IMR-90 (cell line): ENCODE measurements at regions of chr2 and their contacts with region 1.

Region 1: DNA sequence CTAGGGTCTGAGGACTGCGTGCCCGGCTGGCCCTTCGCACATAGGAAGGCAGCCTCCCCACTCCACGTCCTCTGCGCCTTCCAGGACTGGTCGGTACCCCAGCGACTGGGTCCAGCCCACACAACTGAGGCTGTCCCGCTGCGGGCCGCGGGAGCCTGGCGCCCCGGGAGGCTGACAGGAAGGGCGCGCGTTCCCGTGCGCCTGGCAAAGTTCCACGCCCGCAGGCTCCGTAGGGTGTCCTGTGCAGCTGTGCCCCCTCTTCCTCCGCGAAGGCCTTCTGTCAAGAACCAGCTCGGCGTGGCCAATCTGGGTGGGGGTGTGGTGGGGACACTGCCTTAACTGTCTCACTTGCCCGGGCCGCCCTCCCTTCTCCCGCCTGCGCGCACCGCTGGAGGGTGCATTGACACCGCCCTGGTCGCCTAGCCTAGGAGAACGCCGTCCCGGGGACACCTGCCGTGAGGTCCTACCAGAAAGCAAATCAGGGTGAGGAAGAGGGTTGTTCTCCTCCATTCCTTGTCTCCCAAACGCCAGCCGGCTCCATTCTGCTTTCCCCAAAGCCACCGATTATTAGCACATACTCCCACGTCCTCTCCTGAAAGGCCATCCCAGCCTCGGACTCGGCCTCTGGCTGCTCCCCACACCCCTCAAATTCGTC is 618 bp upstream of the LYPD1 start:
- DNase-seq: no peak
- ATAC-seq: peak; percentile 30
- H3K4me3 ChIP-seq: peak overlapping the region; percentile 69
- H3K27ac ChIP-seq: peak overlapping the region; percentile 56
- H3K4me1 ChIP-seq: peaks cover 9% of the 10 kb centered on the region
- H3K27me3 ChIP-seq: no peaks in the 10 kb centered on the region
- CTCF ChIP-seq: no peak
- POLR2A ChIP-seq: no peak
- RAD21 ChIP-seq: no peak

Region 2: DNA sequence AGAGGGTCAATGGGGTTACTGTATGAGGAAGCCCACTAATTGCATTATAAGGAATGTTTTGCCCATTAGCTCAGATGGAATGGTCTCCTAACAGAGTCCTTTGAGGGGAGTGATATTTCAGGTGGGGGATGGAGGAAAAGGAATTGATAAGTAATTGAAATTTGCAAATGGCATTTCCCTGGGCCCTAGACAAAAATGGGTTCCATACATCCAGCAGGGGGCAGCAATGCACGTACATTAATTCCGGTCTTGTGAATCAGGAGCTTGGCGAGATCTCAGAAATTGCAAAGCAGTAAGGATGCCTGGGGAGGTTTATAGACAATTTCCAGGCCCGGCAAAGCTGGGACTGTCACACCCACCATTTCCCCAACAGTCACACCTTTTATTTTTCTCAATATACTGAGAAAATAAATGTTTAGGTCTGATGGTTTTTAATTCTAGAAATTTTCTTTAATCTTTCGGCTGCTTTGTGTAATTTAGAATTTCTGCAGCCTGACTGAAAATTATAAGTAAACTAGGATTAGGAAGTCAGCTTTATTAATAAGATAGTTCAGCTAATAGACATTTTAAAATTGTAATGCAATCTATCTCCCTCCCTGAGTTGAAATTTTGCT is 123.4 kb before region 1 on chr2:
- CTCF ChIA-PET with region 1: interaction called, 4 read pairs
- POLR2A ChIA-PET with region 1: no interaction called
- dilution Hi-C with region 1: no loop called
- in situ Hi-C with region 1: no loop called
- intact Hi-C with region 1: loop called (anchors 5 kb)
- DNase-seq: peak; percentile 85
- ATAC-seq: peak; percentile 67
- H3K4me3 ChIP-seq: no peak overlapping the region
- H3K27ac ChIP-seq: no peak overlapping the region
- H3K4me1 ChIP-seq: peaks cover 3% of the 10 kb centered on the region
- H3K27me3 ChIP-seq: no peaks in the 10 kb centered on the region
- CTCF ChIP-seq: peak; percentile 78
- POLR2A ChIP-seq: no peak
- RAD21 ChIP-seq: peak; percentile 85

Region 3: DNA sequence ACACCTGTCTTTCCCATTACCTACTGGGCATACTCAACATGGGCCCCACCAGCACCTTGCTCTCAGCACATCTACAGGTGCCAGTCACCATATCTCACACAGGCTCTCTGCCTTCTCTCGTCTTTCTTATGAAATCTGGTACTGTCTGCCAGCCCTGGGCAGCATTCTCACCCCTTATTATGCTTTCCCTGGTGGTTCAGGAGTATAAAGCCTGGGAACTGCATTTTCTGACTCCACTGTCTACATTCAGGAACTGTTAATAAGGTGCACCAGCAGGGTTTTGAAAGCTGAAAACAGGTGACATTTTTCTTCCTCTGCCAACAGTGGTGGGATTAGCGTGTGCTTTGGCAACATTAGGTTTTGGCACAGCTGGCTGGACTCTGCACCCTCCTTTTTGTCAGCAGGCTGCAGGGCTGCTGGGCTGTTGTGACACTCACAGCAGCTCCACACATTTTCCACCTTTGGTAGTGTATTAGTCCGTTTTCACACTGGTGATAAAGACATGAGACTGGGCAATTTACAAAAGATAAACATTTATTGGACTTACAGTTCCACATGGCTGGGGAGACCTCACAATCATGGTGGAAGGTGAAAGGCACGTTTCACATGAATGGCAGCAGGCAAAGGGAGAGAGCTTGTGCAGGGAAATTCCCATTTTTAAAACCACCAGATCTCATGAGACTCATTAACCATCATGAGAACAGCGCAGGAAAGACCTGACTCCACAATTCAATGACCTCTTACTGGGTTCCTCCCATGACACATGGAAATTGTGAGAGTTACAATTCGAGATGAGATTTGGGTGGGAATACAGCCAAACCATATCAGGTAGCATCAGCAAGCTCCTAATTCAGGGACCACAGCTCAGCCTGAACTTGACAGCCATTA is 342.5 kb after region 1 on chr2:
- CTCF ChIA-PET with region 1: no interaction called
- POLR2A ChIA-PET with region 1: no interaction called
- dilution Hi-C with region 1: no loop called
- in situ Hi-C with region 1: no loop called
- intact Hi-C with region 1: no loop called
- DNase-seq: no peak
- ATAC-seq: no peak
- H3K4me3 ChIP-seq: no peak overlapping the region
- H3K27ac ChIP-seq: no peak overlapping the region
- H3K4me1 ChIP-seq: no peaks in the 10 kb centered on the region
- H3K27me3 ChIP-seq: no peaks in the 10 kb centered on the region
- CTCF ChIP-seq: no peak
- POLR2A ChIP-seq: no peak
- RAD21 ChIP-seq: no peak